ENCODE measurements at regions of chr12 and their contacts with region 1.

Region 1: GRCh38 chr12:116142936-116143898 is 134.3 kb downstream of the MED13L start:
- DNase-seq: peak; percentile 93
- ATAC-seq: peak; percentile 89
- H3K4me3 ChIP-seq: peak overlapping the region; percentile 36
- H3K27ac ChIP-seq: peak overlapping the region; percentile 71
- H3K4me1 ChIP-seq: peaks cover 37% of the 10 kb centered on the region
- H3K27me3 ChIP-seq: no peaks in the 10 kb centered on the region
- CTCF ChIP-seq: no peak

Region 2: GRCh38 chr12:114952573-114953271 is 1190.5 kb before region 1 on chr12:
- CTCF ChIA-PET with region 1: no interaction called
- POLR2A ChIA-PET with region 1: no interaction called
- intact Hi-C with region 1: no loop called
- DNase-seq: no peak
- ATAC-seq: no peak
- H3K4me3 ChIP-seq: no peak overlapping the region
- H3K27ac ChIP-seq: no peak overlapping the region
- H3K4me1 ChIP-seq: no peaks in the 10 kb centered on the region
- H3K27me3 ChIP-seq: no peaks in the 10 kb centered on the region
- CTCF ChIP-seq: no peak

Region 3: GRCh38 chr12:116015525-116015924 is 127.7 kb before region 1 on chr12:
- CTCF ChIA-PET with region 1: interaction called, 3 read pairs
- POLR2A ChIA-PET with region 1: no interaction called
- intact Hi-C with region 1: loop called (anchors 1 kb)
- DNase-seq: peak; percentile 74
- ATAC-seq: peak; percentile 89
- H3K4me3 ChIP-seq: no peak overlapping the region
- H3K27ac ChIP-seq: no peak overlapping the region
- H3K4me1 ChIP-seq: peaks cover 8% of the 10 kb centered on the region
- H3K27me3 ChIP-seq: no peaks in the 10 kb centered on the region
- CTCF ChIP-seq: peak; percentile 87

Region 4: DNA sequence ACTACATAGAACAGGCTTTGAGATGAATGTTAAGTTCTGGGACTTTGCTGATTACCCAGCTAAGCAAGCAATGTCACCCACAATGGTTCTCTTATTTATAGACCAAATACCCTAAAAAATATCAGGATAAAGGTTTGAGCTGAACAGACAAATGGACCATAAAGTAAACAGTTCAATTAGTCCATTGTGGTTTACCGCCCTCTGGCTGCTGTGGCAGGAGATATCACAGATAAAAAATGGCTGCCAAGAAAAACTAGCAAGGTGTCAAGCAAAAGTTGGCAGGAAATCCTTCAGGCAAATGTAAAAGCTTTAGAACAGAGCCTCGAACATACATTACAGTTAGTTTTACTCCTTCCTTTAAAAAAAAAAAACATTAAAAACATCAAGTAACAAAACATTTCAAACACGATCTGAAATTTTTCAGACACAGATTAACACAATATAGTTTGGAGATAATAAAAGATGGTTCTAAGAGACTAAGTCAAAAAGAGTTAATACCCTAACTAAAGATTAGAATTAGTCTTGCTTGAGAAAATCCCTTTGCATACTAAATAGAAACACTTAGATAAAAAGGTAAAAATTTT is 93.0 kb after region 1 on chr12:
- CTCF ChIA-PET with region 1: interaction called, 9 read pairs
- POLR2A ChIA-PET with region 1: interaction called, 3 read pairs
- intact Hi-C with region 1: loop called (anchors 1 kb)
- DNase-seq: peak; percentile 69
- ATAC-seq: peak; percentile 43
- H3K4me3 ChIP-seq: no peak overlapping the region
- H3K27ac ChIP-seq: no peak overlapping the region
- H3K4me1 ChIP-seq: peaks cover 16% of the 10 kb centered on the region
- H3K27me3 ChIP-seq: no peaks in the 10 kb centered on the region
- CTCF ChIP-seq: peak; percentile 91

Region 5: DNA sequence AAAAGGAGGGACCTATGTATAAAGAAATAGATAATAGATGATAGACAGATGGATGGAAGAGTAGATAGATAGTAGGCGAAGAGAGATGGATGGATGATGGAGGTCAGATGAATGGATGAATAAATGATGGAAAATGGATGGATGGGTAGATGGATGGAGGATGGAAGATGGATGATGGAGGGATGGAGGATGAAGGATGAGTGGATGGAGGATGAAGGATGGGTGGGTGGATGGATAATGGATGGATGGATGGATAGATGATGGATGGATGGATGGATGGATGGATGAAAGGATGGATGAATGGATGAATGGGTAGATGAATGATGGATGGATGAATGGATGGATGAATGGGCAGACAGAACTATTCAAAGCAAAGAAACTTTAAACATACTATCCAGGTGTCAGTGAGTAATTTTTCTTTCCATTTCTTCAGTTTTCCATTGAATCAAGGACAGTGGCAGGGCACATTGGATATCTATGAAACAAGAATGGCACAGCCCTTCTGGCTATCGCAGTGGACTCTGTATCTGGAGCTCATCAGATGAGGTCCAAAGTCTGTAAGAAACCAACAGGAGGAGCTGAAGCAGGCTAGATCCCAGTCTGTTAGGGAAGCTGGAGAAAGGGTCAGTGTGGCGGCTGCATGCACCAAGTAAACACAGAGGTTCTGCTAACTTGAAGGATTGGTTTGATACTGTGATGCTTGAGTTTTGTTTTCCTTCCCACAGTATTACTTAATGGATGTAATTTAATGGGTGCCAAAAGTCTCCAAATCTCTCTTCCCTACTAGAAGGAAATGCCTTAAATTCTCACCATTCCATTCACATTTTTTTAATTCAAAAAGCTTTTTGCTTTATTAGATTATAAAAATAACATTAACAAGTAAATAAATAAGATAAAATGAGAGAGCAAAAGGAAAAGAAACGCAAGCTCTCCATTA is 152.4 kb after region 1 on chr12:
- CTCF ChIA-PET with region 1: no interaction called
- POLR2A ChIA-PET with region 1: interaction called, 10 read pairs
- intact Hi-C with region 1: no loop called
- DNase-seq: no peak
- ATAC-seq: no peak
- H3K4me3 ChIP-seq: no peak overlapping the region
- H3K27ac ChIP-seq: no peak overlapping the region
- H3K4me1 ChIP-seq: peaks cover 7% of the 10 kb centered on the region
- H3K27me3 ChIP-seq: no peaks in the 10 kb centered on the region
- CTCF ChIP-seq: no peak

Region 6: GRCh38 chr12:116406516-116406915 is 263.3 kb after region 1 on chr12:
- CTCF ChIA-PET with region 1: no interaction called
- POLR2A ChIA-PET with region 1: interaction called, 6 read pairs
- intact Hi-C with region 1: loop called (anchors 10 kb)
- DNase-seq: peak; percentile 99
- ATAC-seq: peak; percentile 97
- H3K4me3 ChIP-seq: no peak overlapping the region
- H3K27ac ChIP-seq: peak overlapping the region; percentile 74
- H3K4me1 ChIP-seq: peaks cover 25% of the 10 kb centered on the region
- H3K27me3 ChIP-seq: no peaks in the 10 kb centered on the region
- CTCF ChIP-seq: peak; percentile 50

Region 7: DNA sequence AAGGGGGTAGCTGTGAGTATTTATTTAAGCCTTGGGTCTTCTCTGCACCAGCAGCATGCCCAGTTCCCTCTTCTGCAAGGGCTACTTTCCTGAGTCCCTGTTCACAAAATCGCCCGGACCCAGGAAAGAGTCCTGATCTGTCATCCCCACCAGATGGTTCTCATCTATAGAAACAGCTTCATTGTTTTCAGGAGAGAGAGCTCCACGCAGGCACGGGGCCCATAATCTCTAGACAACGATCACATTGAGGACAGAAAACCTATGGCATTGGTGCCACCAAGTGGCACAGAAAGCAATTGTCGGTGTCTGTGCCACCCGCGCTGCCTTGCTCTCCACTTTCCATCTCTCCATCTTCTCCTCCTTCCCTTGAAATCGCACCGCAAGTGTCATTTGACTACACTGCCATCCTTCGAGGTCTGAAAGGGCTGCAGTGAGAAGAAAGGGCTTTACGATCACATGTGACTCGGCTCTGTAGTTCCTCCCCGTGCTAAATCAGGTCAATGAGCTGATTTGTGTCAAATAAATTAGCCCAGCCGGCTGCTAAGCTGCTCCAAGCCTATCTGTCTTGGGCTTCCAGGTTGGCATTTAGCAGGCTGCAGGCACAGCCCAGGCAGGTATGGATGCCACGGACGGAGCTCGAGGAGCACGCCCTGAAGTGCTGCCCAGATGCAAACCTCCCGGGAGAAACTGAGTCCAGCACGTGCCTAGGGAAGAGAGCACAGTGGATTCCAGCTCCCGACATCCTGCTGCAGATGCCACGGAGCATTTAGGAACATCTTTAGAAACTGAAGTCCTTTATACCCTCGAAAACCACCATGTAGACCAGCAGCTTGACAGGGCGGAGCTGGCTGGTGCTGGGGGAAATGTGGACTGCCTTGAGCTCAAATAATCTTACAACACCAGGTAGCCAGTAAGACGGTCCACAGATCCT is 565.9 kb after region 1 on chr12:
- CTCF ChIA-PET with region 1: interaction called, 6 read pairs
- POLR2A ChIA-PET with region 1: no interaction called
- intact Hi-C with region 1: loop called (anchors 5 kb)
- DNase-seq: peak; percentile 86
- ATAC-seq: peak; percentile 92
- H3K4me3 ChIP-seq: peak overlapping the region; percentile 61
- H3K27ac ChIP-seq: no peak overlapping the region
- H3K4me1 ChIP-seq: peaks cover 13% of the 10 kb centered on the region
- H3K27me3 ChIP-seq: peaks cover 8% of the 10 kb centered on the region
- CTCF ChIP-seq: peak; percentile 92